Activated CD4-positive, alpha-beta T cell treated with anti-CD3 and anti-CD28 coated beads, Interleukin-2, amount 10 ng/mL, durations not matched to agents 7 days and 5 days (primary cell): ENCODE measurements at regions of chr16 and their contacts with region 1.

Region 1: GRCh38 chr16:66547101-66547989 is 2.6 kb downstream of the TK2 start:
- DNase-seq: no peak
- H3K4me3 Mint-ChIP-seq: no peak overlapping the region
- H3K27ac Mint-ChIP-seq: peak overlapping the region; percentile 19
- H3K4me1 Mint-ChIP-seq: peaks cover 54% of the 10 kb centered on the region
- H3K27me3 Mint-ChIP-seq: no peaks in the 10 kb centered on the region

Region 2: GRCh38 chr16:66474750-66475199 is 72.6 kb before region 1 on chr16:
- CTCF ChIA-PET with region 1: no interaction called
- POLR2A ChIA-PET with region 1: no interaction called
- DNase-seq: peak; percentile 83
- H3K4me3 Mint-ChIP-seq: no peak overlapping the region
- H3K27ac Mint-ChIP-seq: peak overlapping the region; percentile 39
- H3K4me1 Mint-ChIP-seq: peaks cover 51% of the 10 kb centered on the region
- H3K27me3 Mint-ChIP-seq: no peaks in the 10 kb centered on the region

Region 3: GRCh38 chr16:66490774-66491715 is 56.3 kb before region 1 on chr16:
- CTCF ChIA-PET with region 1: no interaction called
- POLR2A ChIA-PET with region 1: no interaction called
- DNase-seq: no peak
- H3K4me3 Mint-ChIP-seq: no peak overlapping the region
- H3K27ac Mint-ChIP-seq: no peak overlapping the region
- H3K4me1 Mint-ChIP-seq: no peaks in the 10 kb centered on the region
- H3K27me3 Mint-ChIP-seq: no peaks in the 10 kb centered on the region

Region 4: GRCh38 chr16:66529141-66529874 is 18.0 kb before region 1 on chr16:
- CTCF ChIA-PET with region 1: interaction called, 29 read pairs
- POLR2A ChIA-PET with region 1: interaction called, 3 read pairs
- DNase-seq: no peak
- H3K4me3 Mint-ChIP-seq: no peak overlapping the region
- H3K27ac Mint-ChIP-seq: peak overlapping the region; percentile 34
- H3K4me1 Mint-ChIP-seq: peaks cover 36% of the 10 kb centered on the region
- H3K27me3 Mint-ChIP-seq: no peaks in the 10 kb centered on the region

Region 5: DNA sequence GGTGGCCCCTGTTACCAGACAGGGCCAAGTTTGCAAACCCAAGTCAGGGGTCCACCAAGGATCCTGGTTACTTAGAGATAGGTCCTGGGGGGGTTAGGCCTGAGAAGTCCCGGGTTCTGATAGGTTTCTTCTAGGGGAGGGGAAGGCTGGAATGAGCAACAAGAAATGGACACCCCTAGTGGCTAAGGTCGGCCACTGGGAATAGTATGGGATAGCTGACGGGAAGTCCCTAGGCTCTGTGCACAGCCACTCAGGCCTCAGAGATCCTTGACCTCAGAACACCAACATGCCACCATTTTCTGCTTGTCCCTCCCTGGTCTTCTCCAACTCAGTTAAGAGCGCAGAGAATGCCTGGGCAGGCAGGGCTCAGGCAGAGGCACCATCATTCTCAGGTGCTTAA is 10.8 kb before region 1 on chr16:
- CTCF ChIA-PET with region 1: interaction called, 18 read pairs
- POLR2A ChIA-PET with region 1: no interaction called
- DNase-seq: no peak
- H3K4me3 Mint-ChIP-seq: no peak overlapping the region
- H3K27ac Mint-ChIP-seq: no peak overlapping the region
- H3K4me1 Mint-ChIP-seq: peaks cover 15% of the 10 kb centered on the region
- H3K27me3 Mint-ChIP-seq: no peaks in the 10 kb centered on the region